Motor neuron (in vitro differentiated cells): ENCODE measurements at regions of chr3 and their contacts with region 1.

Region 1: DNA sequence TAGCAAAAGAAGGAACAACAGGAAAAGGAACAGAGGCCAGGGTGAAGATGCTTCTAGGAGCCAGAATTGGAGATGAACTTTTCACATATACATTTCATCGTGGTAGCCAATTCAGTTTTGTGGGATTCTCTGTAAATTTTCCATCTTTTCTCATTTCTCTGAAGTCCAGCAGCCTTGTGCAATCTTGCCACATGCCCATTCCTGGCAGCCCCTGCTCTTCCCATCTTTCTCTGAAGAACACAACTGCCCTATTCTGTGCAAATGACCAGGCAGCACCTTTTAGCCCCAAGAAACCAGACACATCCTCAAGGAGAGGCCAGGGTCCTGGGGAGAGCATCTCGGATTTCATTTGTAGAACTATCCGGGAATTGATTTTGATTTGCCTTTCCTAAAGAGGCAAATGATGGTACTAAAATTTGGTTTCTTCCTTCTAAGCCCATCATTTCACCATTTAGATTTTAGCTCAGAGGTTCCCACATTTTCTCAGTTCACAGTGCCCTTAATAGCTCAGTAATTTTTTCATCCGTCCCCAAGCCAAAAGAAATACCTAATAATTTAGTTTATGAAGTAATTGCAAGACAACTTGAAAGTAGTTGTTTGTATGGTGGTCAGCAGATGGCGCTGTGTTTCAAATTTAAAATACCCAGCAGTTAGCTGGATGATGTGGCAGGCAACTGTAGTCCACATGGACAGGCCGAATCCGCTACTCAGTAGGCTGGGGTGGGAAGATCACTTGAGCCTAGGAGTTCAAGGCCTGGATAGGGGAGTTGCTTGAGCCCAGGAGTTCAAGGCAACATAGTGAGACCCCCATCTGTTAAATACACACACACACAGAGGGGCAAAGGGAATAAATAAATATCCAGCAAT is 61.3 kb upstream of the ACKR4 start:
- ATAC-seq: peak; percentile 74 to 92 (median 89)
- H3K4me3 ChIP-seq: no peak overlapping the region
- H3K27ac ChIP-seq: peak overlapping the region in 1 of 2 donors; percentile 47
- H3K4me1 ChIP-seq: no peaks in the 10 kb centered on the region

Region 2: DNA sequence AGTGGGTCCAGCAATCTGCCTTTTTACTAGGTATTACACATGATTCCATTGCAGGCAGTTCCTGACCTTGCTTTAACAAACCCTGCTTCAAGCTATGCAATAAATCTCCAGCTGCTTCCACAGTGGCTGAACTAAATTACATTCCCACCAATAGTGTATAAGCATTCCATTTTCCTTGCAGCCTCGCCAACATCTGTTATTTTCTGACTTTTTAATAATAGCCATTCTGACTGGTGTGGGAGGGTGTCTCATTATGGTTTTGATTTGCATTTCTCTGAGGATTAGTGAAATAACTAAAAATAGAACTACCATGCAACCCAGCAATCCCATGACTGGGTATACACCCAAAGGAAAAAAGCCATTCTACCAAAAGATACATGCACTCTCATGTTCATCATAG is 154.9 kb before region 1 on chr3:
- in situ Hi-C with region 1: no loop called
- ATAC-seq: peak; percentile 77 to 93 (median 84)
- H3K4me3 ChIP-seq: no peak overlapping the region
- H3K27ac ChIP-seq: peak overlapping the region in 1 of 2 donors; percentile 39
- H3K4me1 ChIP-seq: peaks cover 23 to 42% of the 10 kb centered on the region in 2 donors

Region 3: GRCh38 chr3:132641837-132642538 is 106.2 kb after region 1 on chr3:
- in situ Hi-C with region 1: loop called in 3 of 9 experiments (anchors 10 to 25 kb)
- ATAC-seq: peak in 3 of 8 experiments; percentile 54 to 70 (median 63)
- H3K4me3 ChIP-seq: no peak overlapping the region
- H3K27ac ChIP-seq: no peak overlapping the region
- H3K4me1 ChIP-seq: no peaks in the 10 kb centered on the region

Region 4: DNA sequence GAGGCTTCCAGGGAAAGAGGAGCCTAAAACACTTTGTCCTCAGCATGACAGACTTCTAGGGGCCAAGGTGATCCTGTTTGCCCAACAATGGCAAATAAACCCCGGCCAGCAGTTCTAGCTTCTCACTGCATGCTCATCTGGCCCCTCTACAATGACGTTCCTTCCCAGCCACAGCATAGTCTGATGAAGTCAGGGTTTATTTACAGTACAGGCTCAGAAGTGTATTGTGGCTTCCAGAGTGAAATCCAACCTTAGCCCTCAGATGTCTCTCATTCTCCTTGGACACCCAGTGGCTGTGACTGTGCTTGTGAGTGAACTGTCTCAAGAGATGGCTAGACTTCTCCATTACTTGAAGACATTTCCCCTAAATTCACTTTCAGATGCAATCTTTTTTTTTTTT is 904.8 kb after region 1 on chr3:
- in situ Hi-C with region 1: no loop called
- ATAC-seq: no peak
- H3K4me3 ChIP-seq: no peak overlapping the region
- H3K27ac ChIP-seq: no peak overlapping the region
- H3K4me1 ChIP-seq: peaks cover 0 to 11% of the 10 kb centered on the region in 2 donors

Region 5: DNA sequence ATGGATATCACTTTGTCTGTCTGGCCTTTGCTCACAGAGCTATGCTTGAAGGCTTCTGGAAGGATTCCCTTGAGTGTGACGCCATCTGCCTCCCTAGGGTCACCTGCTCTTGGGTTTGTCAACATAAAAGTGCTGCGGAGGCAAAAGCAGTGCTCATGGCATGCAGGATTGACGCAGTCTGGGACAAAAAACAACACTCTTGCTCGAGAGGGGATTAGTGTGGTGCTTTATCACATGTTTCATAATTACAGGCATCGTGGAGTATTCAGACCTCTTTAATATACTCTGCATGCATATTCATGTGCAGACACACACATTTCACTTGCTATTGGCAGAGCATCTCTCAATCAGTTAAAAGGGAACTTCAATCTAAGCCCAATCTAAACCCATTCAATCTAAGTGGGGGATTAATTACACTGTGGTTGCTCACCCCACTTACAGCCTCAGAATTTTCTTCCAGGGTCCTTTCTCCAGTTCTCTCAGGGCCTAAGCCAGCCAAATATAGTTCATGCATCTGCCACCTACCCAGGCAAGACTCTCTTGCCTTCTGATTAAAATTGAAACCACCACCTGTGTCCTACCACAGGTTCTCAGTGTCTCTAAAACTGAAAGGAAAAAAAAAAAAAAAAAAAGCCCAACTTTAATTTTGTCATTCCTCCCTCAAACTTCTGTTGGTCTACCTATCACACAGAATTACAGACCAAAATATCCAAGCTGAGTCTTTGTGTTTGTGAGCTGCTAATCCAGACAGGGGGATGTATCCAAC is 939.6 kb after region 1 on chr3:
- in situ Hi-C with region 1: no loop called
- ATAC-seq: no peak
- H3K4me3 ChIP-seq: no peak overlapping the region
- H3K27ac ChIP-seq: no peak overlapping the region
- H3K4me1 ChIP-seq: peaks cover 56 to 67% of the 10 kb centered on the region in 2 donors